ENCODE measurements at regions of chrX and their contacts with region 1.

Region 1: DNA sequence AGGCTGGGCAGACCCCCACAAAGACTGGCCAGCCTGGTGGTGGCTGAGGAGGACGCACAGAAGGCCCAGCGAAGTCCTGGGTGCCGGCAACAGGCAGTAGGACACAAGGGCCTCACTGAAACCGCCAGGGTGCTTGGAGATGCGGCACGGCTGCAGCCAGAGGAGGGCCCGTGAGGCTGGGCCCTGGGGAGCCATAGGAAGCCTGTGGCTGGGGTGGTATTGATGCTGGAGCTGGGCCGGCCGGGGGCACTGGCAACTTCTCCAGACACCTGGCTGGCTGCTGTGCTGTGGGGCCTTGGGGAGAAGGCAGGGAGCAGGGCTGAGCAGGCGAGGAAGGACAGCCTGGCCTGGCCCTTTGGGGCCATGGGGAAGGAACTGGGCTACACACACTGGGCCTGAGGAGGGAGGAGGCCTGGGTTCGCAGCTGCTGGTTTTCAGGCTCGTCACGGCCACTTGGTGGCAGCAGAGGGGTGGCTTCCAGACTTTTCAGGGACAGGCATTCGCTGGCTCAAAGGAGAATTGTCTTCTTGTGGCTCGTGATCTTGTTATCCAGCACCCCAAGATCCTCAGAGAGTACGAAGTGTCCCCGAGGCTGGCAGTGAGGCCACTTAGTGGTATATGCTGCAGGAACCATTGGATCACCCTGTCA is 37.2 kb downstream of the ATP2B3 start:
- DNase-seq: peak; percentile 67 to 82
- ATAC-seq: peak; percentile 69 to 89 (median 78)
- H3K4me3 ChIP-seq: no peak overlapping the region
- H3K27ac ChIP-seq: no peak overlapping the region
- H3K4me1 ChIP-seq: no peaks in the 10 kb centered on the region
- H3K27me3 ChIP-seq: peaks cover 0 to 4% (median under 1%) of the 10 kb centered on the region in 3 donors
- CTCF ChIP-seq: peak; percentile 58

Region 2: DNA sequence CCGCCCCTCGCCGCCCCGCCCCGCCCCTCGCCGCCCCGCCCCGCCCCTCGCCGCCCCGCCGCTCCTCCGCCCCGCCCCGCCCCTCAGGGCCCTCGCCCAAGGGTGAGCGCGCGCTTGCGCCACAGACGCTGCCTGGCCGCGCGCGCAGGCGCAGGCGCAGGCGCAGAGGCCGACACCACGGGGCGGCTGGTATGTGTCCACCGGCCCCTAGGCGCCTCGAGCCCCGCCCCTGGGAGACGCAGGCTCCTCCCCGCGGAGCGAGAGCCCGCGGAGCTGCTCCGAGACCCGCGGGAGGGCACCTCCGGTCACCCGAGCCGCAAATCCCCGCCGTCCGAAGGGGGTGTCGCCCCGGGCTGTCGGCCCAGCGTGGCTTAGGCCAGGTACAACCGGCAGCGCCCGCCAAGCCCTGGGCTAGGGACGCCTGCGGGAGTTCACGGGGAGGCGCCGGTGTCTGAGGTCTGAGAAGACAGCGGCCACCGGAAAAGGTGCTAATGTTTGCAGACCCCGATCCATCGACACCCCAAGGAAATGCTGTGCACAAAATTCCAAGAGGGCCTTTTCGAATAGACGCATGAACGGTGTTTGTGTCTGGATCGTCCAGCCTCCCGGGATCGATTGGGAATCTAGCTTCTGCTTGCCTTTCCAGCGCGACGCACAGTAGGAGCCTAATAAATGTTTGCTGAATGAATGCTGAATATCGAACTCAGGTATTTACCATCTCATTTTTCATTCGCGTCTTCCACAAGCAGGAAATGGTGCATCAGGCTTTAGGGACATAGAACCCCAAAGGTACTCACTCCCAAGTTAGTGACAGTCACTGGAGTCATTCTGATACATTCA is 44.8 kb after region 1 on chrX:
- intact Hi-C with region 1: no loop called
- DNase-seq: peak; percentile 88 to 95
- ATAC-seq: peak; percentile 96 to 98 (median 96)
- H3K4me3 ChIP-seq: peak overlapping the region; percentile 66
- H3K27ac ChIP-seq: peak overlapping the region; percentile 43
- H3K4me1 ChIP-seq: no peaks in the 10 kb centered on the region
- H3K27me3 ChIP-seq: peaks cover 0 to 5% (median 0%) of the 10 kb centered on the region in 3 donors
- CTCF ChIP-seq: no peak

Region 3: GRCh38 chrX:153609917-153610428 is 55.3 kb after region 1 on chrX:
- intact Hi-C with region 1: loop called in 1 of 2 experiments (anchors 10 kb)
- DNase-seq: peak; percentile 78 to 87
- ATAC-seq: peak; percentile 80 to 97 (median 92)
- H3K4me3 ChIP-seq: peak overlapping the region; percentile 46
- H3K27ac ChIP-seq: no peak overlapping the region
- H3K4me1 ChIP-seq: no peaks in the 10 kb centered on the region
- H3K27me3 ChIP-seq: peaks cover 0 to 27% (median 4%) of the 10 kb centered on the region in 3 donors
- CTCF ChIP-seq: peak; percentile 70

Region 4: DNA sequence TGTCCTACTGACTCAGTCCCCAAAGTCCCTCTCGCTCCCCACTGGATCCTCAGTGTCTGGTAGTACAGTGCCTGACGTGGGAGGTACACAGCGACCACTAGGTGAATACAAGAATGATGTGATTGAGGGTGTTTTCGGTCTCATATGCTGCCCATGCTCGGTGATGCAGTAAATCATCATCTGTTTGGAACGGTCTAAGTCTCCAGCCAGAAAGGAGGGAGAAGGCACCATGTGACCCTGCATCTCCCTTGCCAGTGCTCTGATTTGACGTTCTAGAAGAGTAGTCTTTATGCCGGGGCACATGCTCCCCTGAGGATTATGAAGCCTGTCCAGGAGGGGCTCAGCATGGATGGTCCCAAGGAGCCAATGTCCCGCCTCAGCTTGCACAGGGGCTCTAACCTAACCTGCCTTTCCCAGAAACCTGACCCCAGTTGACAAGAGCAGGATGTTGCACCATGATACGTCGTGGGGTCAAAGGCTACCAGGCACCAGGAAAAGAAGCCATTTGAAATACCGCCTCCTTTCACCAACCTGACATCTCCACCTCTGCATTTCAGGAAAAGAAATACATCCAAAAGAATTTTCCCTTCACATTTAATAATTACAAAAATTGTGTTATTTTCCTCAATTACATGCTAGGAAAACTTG is 195.6 kb after region 1 on chrX:
- intact Hi-C with region 1: no loop called
- DNase-seq: no peak
- ATAC-seq: no peak
- H3K4me3 ChIP-seq: no peak overlapping the region
- H3K27ac ChIP-seq: no peak overlapping the region
- H3K4me1 ChIP-seq: no peaks in the 10 kb centered on the region
- H3K27me3 ChIP-seq: peaks cover 0 to 19% (median 0%) of the 10 kb centered on the region in 3 donors
- CTCF ChIP-seq: no peak